Dendritic cell treated with granulocyte-macrophage colony-stimulating factor and Interleukin-4, amounts not matched to agents 40 ng/mL and 50 ng/mL, for 4 days (primary cell): ENCODE measurements at regions of chr4 and their contacts with region 1.

Region 1: GRCh38 chr4:48141048-48141447 is 7.0 kb upstream of the TXK start:
- H3K4me3 Mint-ChIP-seq: no peak overlapping the region
- H3K27ac Mint-ChIP-seq: no peak overlapping the region
- H3K4me1 Mint-ChIP-seq: no peaks in the 10 kb centered on the region
- H3K27me3 Mint-ChIP-seq: no peaks in the 10 kb centered on the region

Region 2: DNA sequence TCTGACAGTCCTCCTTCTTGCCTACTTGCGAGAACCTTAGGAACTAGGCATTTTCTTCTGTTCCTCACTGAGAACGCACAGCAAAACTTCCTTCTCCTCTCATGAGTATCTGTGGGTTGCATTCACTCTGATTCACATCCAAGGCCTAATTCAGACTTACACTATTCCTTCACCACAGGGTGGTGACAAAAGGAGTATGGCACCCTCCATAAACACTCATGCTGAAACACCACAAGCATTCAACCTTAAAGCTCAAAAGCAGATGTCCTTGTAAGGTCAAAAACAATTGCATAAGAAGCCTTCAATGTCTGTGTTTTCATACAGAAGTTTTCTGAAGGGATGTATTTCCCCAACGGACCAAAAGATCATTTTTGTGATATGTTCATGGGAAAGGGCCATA is 450.4 kb before region 1 on chr4:
- intact Hi-C with region 1: no loop called
- H3K4me3 Mint-ChIP-seq: no peak overlapping the region
- H3K27ac Mint-ChIP-seq: no peak overlapping the region
- H3K4me1 Mint-ChIP-seq: no peaks in the 10 kb centered on the region
- H3K27me3 Mint-ChIP-seq: peaks cover 3% of the 10 kb centered on the region

Region 3: DNA sequence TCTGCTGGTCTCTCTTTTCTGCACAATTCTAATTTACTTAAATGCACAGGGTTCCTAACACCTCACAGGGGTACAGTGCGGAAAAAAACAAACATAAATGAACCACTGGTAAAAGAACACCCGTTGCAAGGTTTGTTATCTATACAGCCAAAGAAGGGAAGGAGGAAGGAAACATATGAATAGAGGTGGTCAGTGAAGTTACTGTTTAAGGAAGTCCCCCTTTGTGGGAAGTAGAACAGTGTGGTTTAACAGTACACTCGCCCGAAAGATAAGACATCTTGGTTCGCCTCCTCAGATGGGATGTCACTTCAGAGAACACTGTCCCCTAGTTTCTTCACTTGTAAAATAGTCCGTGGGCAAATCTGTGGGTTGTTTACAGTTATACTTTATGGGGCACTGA is 71.1 kb after region 1 on chr4:
- intact Hi-C with region 1: no loop called
- H3K4me3 Mint-ChIP-seq: no peak overlapping the region
- H3K27ac Mint-ChIP-seq: no peak overlapping the region
- H3K4me1 Mint-ChIP-seq: peaks cover 44% of the 10 kb centered on the region
- H3K27me3 Mint-ChIP-seq: no peaks in the 10 kb centered on the region

Region 4: GRCh38 chr4:48275247-48275646 is 134.2 kb after region 1 on chr4:
- intact Hi-C with region 1: loop called (anchors 5 kb)
- H3K4me3 Mint-ChIP-seq: no peak overlapping the region
- H3K27ac Mint-ChIP-seq: no peak overlapping the region
- H3K4me1 Mint-ChIP-seq: peaks cover 22% of the 10 kb centered on the region
- H3K27me3 Mint-ChIP-seq: no peaks in the 10 kb centered on the region